CD8-positive, alpha-beta T cell (primary cell): ENCODE measurements at regions of chr18 and their contacts with region 1.

Region 1: DNA sequence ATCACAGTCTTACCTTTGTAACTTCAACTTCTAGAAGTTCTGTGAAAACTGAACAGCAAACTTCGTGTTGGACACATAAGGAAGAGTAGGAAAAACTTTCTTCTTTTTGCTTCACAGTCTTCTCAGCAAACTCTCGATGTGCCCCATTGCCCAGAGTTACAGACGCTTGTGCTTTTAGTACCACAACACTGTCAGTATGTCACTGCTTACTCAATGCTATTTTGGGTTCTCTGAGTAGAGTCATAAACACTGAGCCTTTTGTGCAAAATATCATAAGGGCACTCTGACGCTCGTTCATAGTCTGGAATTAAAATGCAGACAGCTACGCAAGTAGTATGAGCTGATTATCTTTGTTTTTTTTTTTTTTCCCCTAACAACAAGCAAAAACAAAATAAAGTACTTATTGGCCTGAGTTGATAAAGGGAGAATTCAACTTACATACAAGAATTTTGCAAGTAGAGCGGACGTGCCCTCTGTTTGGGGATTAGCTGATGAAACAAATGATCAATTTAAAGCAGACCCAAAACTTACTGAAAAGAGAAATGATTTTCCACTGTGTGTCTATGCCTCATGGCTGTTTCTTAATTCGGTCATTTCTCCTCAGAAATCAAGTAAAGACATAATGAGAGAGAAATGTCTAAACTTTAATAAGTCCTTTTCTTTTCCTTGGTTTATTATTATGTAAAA is at the start of gene CDH19:
- DNase-seq: no peak
- ATAC-seq: no peak
- H3K4me3 ChIP-seq: no peak within 1 kb of the TSS
- H3K4me3 Mint-ChIP-seq: no peak within 1 kb of the TSS
- H3K27ac ChIP-seq: no peak within 1 kb of the TSS
- H3K27ac Mint-ChIP-seq: no peak within 1 kb of the TSS
- H3K4me1 ChIP-seq: no peaks in the 10 kb centered on the region
- H3K4me1 Mint-ChIP-seq: no peaks in the 10 kb centered on the region
- H3K27me3 ChIP-seq: no peaks in the 10 kb centered on the region
- H3K27me3 Mint-ChIP-seq: no peaks in the 10 kb centered on the region
- CTCF ChIP-seq: no peak
- total RNA-seq, gene CDH19: not detected

Region 2: DNA sequence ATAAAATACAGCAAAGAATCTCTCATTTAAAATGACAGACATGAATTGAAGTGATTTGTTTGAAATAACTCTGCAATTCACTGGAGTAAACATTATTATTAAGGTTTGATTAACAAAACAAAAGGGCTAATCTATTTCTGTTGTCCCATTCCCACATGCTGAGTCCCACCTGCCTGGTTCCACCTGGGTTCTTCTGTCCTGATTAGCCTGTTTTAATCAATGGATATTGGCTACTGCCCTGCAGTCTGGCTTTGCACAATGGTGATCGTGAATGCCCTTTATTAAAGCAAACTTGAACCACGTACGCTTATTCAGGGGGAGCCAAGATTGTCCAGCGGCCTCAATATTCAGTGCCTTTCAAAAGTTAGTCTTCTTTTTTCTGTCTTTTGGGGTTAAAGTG is 72.6 kb after region 1 on chr18:
- CTCF ChIA-PET with region 1: no interaction called
- POLR2A ChIA-PET with region 1: no interaction called
- intact Hi-C with region 1: loop called in 1 of 2 experiments (anchors 10 kb)
- DNase-seq: no peak
- ATAC-seq: no peak
- H3K4me3 ChIP-seq: no peak overlapping the region
- H3K4me3 Mint-ChIP-seq: no peak overlapping the region
- H3K27ac ChIP-seq: no peak overlapping the region
- H3K27ac Mint-ChIP-seq: no peak overlapping the region
- H3K4me1 ChIP-seq: no peaks in the 10 kb centered on the region
- H3K4me1 Mint-ChIP-seq: no peaks in the 10 kb centered on the region
- H3K27me3 ChIP-seq: no peaks in the 10 kb centered on the region
- H3K27me3 Mint-ChIP-seq: no peaks in the 10 kb centered on the region
- CTCF ChIP-seq: no peak